Heart left ventricle (tissue), 16 donors: ENCODE measurements at regions of chr17 and their contacts with region 1.

Region 1: GRCh38 chr17:39621523-39622379 is 5.0 kb upstream of the PPP1R1B start:
- DNase-seq: peak; percentile 77 to 93 (median 84)
- ATAC-seq: peak; percentile 67 to 79 (median 74)
- H3K4me3 ChIP-seq: no peak overlapping the region
- H3K27ac ChIP-seq: no peak overlapping the region
- H3K4me1 ChIP-seq: peaks cover 0 to 31% (median 10%) of the 10 kb centered on the region in 12 donors
- H3K27me3 ChIP-seq: peaks cover 0 to 23% (median 19%) of the 10 kb centered on the region in 9 donors
- CTCF ChIP-seq: peak; percentile 99 to 100 (median 100)
- POLR2A ChIP-seq: no peak

Region 2: GRCh38 chr17:39527220-39527813 is 94.4 kb before region 1 on chr17:
- intact Hi-C with region 1: loop called in 2 of 10 experiments (anchors 5 kb)
- DNase-seq: no peak
- ATAC-seq: peak in 2 of 4 donors; percentile 36 to 49
- H3K4me3 ChIP-seq: no peak overlapping the region
- H3K27ac ChIP-seq: no peak overlapping the region
- H3K4me1 ChIP-seq: peaks cover 0 to 14% (median under 1%) of the 10 kb centered on the region in 12 donors
- H3K27me3 ChIP-seq: no peaks in the 10 kb centered on the region
- CTCF ChIP-seq: peak; percentile 19 to 58 (median 40)
- POLR2A ChIP-seq: no peak

Region 3: DNA sequence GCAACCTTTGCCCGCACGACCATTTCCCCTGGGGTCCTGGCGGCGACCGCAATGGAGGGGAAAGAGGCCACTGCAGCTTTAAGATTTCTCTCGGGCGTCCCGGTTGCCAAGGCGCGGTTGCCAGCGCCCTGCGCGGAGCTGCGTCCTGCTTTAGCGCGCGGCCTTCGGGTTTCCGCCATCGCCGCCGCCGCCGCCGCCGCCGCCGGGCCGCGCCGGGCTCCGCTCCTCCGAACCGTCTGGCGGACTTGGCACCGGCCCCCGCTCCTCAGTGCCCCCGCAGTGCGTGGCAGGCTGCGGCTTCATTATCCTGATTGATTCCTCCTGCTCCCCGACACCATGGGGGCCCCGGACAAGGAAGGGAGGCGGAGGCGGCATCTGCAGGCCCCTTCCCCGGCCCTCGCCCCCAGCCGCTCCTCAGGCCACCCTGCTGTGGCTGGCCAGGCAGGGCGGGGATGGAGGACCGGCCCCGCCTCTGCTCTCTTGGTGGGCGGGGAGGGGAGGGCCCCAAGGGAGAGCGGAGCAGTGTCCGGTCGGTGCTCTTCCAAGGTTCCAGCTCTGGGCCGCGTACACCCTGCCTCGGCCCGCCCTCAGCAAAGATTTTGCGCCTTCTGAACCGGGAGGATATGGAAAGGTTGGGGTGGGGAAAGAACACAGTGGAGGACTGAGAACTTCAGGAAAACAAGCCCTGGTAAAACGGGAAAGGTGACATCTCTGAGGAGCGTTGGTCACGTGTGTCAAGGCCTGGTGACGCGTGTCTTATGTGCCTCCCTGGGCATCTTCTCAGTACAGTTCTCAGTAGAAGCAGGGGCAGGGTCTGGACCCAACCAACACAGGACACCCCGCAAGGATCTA is 48.1 kb before region 1 on chr17:
- intact Hi-C with region 1: loop called in 3 of 10 experiments (anchors 5 to 10 kb)
- DNase-seq: peak; percentile 78 to 87 (median 81)
- ATAC-seq: peak; percentile 92 to 97 (median 96)
- H3K4me3 ChIP-seq: peak overlapping the region; percentile 54 to 89 (median 68)
- H3K27ac ChIP-seq: peak overlapping the region; percentile 75 to 92 (median 87)
- H3K4me1 ChIP-seq: peaks cover 4 to 21% (median 10%) of the 10 kb centered on the region in 12 donors
- H3K27me3 ChIP-seq: no peaks in the 10 kb centered on the region
- CTCF ChIP-seq: no peak
- POLR2A ChIP-seq: peak in 1 of 2 donors; percentile 43

Region 4: DNA sequence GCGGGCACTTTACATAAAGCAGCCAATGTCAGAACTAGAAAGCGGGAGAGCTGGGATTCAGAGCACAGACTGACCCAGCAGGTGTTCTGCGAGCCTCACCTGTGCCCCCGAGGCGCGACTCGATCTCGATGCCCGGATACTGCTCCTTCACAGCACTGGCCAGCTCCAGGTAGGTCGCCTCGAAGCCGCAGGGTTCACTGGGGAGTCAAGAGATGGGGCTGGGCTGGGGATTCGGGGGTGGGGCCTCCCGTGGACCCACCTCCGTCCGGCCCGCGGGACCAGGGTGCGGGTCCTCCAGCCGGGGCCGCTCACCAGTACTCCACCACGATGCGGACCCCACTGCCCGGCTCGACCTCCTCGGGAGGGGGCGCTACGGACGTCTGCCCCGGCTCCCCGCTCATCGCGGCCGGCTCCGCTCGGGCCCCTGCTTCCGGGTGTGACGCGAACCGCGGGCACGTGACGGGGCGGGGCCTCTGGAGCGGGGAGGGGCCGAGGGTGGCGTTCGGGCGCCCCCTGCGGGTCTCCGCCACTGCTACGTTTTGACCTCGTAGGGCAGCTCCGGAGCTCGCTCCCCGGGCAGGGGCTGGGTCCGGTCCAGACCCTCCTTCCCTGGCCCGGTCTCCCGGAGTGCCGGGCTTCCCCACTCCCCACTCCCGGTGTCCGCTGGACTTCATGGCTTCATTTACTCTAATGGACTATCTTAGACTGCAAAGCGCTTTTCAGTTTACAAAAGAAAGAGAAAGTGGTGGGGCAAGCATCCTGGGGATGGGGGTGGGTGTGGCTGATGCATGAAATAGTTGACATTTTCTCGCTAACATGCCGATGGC is 108.6 kb after region 1 on chr17 and contains the start of gene MIEN1:
- intact Hi-C with region 1: loop called in 1 of 10 experiments (anchors 5 kb)
- DNase-seq: peak; percentile 90 to 98 (median 94)
- ATAC-seq: peak; percentile 87 to 97 (median 96)
- H3K4me3 ChIP-seq: peak within 1 kb of the TSS; percentile 56 to 99 (median 81)
- H3K27ac ChIP-seq: peak within 1 kb of the TSS; percentile 48 to 97 (median 90)
- H3K4me1 ChIP-seq: peaks cover 0 to 19% (median 8%) of the 10 kb centered on the region in 12 donors
- H3K27me3 ChIP-seq: peaks cover 0 to 2% (median 0%) of the 10 kb centered on the region in 9 donors
- CTCF ChIP-seq: peak; percentile 88 to 98 (median 92)
- POLR2A ChIP-seq: peak; percentile 6 to 87
- total RNA-seq, gene MIEN1: 34.3 to 98.1 (median 53.3) TPM

Region 5: DNA sequence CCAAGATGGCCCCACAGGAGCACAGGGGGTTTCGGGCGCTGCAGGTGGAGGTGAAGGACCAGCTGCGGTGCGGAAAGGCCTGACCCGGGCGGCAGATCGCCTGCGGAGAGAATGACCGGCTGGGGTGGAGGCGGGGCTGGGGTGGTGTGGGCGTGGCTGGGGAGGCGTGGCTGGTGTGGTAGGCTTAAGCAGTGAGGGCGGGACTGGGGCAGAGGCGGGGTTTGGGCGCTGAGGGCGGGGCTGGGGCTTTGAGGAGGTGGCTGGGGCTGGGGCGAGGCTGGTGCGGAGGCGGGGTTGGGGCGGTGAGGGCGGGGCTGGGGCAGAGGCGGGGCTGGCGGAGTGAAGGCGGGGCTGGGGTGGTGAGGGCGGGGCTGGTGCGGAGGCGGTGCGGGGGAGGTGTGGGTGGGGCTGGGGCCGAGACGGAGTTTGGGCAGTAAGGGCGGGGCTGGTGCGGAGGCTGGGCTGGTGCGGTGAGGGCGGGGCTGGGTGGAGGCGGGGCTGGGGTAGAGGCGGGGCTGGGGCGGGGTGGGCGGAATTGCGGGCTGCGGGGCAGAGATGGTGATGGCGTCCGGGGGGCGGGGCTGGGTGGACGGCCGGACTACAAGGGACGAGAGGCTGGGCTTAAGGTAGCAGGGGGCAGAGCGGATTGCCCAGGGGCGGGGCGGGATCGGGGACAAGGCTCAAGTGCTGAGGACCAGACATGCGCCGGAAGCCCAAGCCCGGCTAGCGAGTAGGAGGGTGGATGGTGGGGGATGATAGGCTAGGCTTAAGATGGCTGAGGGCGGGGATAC is 331.1 kb after region 1 on chr17:
- intact Hi-C with region 1: loop called in 1 of 10 experiments (anchors 10 kb)
- DNase-seq: peak; percentile 98 to 99 (median 98)
- ATAC-seq: peak; percentile 92 to 95 (median 94)
- H3K4me3 ChIP-seq: peak overlapping the region in 10 of 12 donors; percentile 26 to 62 (median 48)
- H3K27ac ChIP-seq: peak overlapping the region in 10 of 12 donors; percentile 2 to 78 (median 60)
- H3K4me1 ChIP-seq: peaks cover 0 to 33% (median 13%) of the 10 kb centered on the region in 12 donors
- H3K27me3 ChIP-seq: no peaks in the 10 kb centered on the region
- CTCF ChIP-seq: no peak
- POLR2A ChIP-seq: peak in 1 of 2 donors; percentile 35